Left ventricle myocardium superior (tissue), 1 donor: ENCODE measurements at regions of chr13 and their contacts with region 1.

Region 1: DNA sequence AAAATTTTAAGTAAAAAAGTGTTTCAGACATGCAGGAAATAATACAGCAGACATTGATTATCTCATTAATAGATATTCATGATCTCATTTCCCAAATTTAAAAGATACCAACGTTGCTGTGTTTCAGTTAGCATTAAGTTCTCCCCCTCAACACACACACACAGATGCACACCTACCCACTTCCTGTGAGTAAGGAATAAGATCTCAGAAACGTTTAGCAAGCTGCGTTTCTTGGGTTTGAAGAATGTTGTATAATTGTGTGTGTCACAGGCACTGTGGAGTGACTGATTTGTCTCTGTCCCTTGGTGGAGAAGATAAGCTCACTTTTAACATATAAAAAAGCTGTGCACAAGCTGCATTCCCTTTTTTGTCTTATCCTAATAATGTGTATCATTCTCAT is 196.8 kb downstream of the PDS5B start:
- DNase-seq: no peak
- ATAC-seq: no peak

Region 2: DNA sequence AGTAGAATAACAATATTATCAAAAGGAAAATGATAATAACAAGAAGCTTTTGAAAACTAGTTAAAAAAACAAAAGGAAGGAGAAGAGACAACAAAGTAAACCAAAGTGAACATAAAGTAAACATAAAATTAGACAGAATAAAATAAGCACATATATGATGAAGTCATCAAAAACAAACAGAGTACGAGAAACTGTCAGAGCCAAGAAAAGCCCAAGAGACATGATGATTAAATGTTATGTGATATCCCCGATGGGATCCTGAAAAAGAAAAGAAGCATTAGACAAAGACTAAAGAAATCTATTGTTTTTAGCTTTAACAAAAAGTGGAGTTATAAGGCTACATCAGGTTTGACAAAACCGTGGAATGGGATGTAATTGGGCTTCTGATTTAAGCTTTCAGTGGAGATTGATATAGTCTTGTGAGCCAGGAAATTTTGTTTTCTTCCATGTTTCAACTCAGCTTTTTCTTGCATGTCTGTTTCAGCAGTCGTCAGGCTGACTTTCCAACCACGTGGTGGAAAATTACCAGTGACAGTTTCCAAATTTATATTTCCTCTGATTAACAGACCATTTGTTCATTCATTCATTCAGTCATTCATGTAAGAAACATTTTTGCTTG is 298.0 kb after region 1 on chr13:
- intact Hi-C with region 1: loop called (anchors 10 kb)
- DNase-seq: no peak
- ATAC-seq: no peak